Tibial artery (tissue), 4 donors: ENCODE measurements at regions of chr3 and their contacts with region 1.

Region 1: DNA sequence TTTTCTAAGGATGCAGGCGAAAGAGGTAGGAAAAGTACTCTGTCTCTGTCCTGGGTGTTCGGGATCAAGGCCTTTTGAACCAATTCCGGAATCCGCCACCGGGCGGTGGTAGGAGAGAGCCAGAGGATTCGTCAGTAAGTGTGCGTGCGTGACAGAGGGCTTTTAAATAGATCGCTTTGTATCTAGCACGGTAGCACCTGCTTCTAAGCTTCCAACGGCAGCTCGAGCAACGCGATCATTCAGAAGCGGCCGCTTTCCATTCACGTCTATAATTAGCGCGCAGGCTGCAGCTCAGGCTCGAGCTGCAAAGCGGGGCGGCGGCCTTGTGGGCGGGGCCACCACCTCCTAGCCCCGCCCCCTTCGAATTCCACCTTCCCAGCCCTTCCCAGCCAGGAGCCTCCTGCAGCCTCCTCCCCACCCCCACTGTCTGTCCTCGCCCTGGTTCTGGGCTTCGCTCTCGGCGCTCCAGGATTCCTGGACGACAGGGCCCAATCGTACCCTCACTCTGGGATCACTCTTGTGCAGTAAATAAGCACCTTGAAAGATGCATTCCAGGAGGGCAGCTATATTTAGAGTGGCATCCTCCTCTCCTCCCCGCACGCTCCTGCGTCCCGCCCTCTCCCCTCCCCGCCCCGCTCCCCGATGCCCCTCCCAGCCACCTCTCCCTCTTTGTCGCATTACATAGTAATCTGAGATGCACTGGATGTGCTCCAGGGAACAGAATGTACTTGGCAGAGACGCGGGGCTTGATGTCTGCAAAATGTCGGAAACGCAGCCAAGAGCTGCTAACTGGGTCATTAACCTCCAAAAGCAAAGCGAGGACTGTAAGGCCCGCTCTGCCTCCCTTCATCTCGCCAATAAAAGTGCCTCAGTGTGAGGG is 224.1 kb upstream of the TPRG1 start:
- DNase-seq: peak; percentile 98 to 99
- H3K4me3 ChIP-seq: peak overlapping the region; percentile 44 to 56
- H3K27ac ChIP-seq: peak overlapping the region; percentile 86 to 87
- H3K4me1 ChIP-seq: peaks cover 4 to 90% (median 78%) of the 10 kb centered on the region in 4 donors
- H3K27me3 ChIP-seq: no peaks in the 10 kb centered on the region
- CTCF ChIP-seq: peak; percentile 36 to 50

Region 2: GRCh38 chr3:188286087-188286513 is 661.5 kb before region 1 on chr3:
- intact Hi-C with region 1: loop called (anchors 10 kb)
- DNase-seq: peak; percentile 84 to 90
- H3K4me3 ChIP-seq: no peak overlapping the region
- H3K27ac ChIP-seq: peak overlapping the region; percentile 80 to 90
- H3K4me1 ChIP-seq: peaks cover 0 to 100% (median 72%) of the 10 kb centered on the region in 4 donors
- H3K27me3 ChIP-seq: no peaks in the 10 kb centered on the region
- CTCF ChIP-seq: peak in 1 of 2 experiments; percentile 15

Region 3: GRCh38 chr3:188607805-188608315 is 339.8 kb before region 1 on chr3:
- intact Hi-C with region 1: loop called (anchors 10 kb)
- DNase-seq: no peak
- H3K4me3 ChIP-seq: no peak overlapping the region
- H3K27ac ChIP-seq: peak overlapping the region; percentile 52 to 77
- H3K4me1 ChIP-seq: peaks cover 0 to 81% (median 27%) of the 10 kb centered on the region in 4 donors
- H3K27me3 ChIP-seq: no peaks in the 10 kb centered on the region
- CTCF ChIP-seq: no peak